Thyroid gland (tissue), 4 donors: ENCODE measurements at regions of chr17 and their contacts with region 1.

Region 1: GRCh38 chr17:1188812-1189504 is 9.2 kb upstream of the ABR start:
- DNase-seq: peak; percentile 53 to 62
- H3K4me3 ChIP-seq: no peak overlapping the region
- H3K27ac ChIP-seq: peak overlapping the region in 1 of 3 donors; percentile 59
- H3K4me1 ChIP-seq: peaks cover 0 to 33% of the 10 kb centered on the region in 2 donors
- H3K27me3 ChIP-seq: no peaks in the 10 kb centered on the region
- CTCF ChIP-seq: no peak
- POLR2A ChIP-seq: no peak

Region 2: GRCh38 chr17:1122533-1123392 is 66.2 kb before region 1 on chr17:
- intact Hi-C with region 1: loop called (anchors 2 kb)
- DNase-seq: peak; percentile 74 to 84
- H3K4me3 ChIP-seq: no peak overlapping the region
- H3K27ac ChIP-seq: peak overlapping the region in 2 of 3 donors; percentile 37 to 49
- H3K4me1 ChIP-seq: peaks cover 4 to 19% of the 10 kb centered on the region in 2 donors
- H3K27me3 ChIP-seq: no peaks in the 10 kb centered on the region
- CTCF ChIP-seq: peak; percentile 74 to 94 (median 94)
- POLR2A ChIP-seq: no peak